Cardiac septum (tissue), 1 donor: ENCODE measurements at regions of chr2 and their contacts with region 1.

Region 1: GRCh38 chr2:4992226-4992625 is 700.0 kb upstream of the SOX11 start:
- DNase-seq: no peak

Region 2: DNA sequence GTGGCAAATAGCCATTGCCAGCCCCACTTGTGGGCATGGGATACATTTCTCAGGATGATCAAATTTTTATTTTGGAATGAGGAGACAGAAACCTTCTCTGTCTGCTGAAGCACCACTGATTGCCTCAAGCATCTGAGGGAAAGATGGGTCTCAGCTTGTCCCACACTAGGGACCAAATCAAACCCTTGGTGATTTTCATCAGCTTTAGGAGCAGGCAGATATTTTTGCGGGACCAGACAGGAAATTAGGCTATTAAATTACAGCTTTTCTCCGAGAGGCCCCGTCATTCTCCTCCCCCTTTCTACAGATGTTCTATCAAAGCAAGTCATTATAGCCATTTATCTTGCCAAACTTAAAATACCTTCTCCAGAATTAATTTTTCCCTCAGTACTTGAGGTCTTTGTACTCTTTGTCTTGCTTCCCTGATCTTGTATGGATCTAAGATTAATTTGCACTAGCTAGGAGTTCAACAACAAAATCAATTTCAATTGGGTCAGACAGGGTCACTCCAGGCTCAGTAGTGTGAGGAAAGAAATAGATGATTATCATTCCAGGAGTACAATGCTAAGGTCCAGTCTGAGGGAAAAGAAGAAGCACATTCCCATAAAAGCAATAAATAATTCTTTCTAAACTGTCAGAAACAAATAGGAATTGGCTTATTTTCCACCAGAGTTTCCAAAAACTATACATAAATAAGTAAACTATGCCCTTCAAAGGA is 118.2 kb before region 1 on chr2:
- intact Hi-C with region 1: no loop called
- DNase-seq: no peak

Region 3: DNA sequence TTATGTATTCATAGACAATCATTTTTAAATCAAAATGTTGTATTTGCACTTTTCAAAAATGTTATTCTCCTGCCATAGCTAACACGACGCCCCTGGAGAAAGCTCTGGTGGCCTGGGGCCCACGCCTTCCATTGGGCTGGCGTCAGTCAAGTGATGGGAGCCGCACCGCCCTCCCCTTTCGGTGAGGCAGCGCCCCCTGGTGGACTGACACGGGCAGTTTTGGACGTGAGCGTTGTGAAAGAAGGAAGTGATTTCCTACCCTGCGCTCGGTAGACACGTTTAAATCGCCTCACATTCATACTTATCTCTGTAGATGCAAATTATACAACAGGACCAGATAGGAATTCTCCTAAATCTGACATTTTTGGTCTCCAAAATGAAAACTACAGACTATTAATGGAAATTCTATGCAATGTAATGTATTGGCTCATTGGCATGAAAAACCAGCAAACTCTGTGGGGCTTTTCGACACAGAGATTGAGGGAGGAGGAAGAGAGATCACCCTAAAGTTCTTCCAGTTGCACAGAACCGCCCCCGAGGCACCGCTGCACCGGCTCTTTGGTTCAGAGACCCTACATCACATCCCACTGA is 373.7 kb after region 1 on chr2:
- intact Hi-C with region 1: loop called (anchors 5 kb)
- DNase-seq: no peak